OCI-LY7 (cell line): ENCODE measurements at regions of chr16 and their contacts with region 1.

Region 1: DNA sequence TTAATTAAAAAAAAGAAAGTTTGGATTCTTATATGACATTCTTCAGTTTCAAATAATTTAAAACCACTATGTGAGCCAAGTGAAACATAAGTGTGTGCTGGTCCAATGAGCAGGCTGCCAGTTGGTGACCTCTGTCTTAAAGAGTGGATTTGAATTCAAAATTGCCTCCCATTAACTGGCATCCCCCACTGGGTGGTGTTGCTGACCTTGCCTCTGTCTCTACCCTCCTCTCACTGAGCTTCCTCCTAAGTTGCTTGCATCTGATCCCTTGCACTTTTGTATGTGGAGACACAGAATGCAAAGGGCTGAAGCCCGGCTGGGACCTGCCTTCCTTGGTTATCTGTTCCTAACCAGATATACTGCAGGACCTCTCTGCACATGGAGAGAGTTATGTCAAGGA is 160.6 kb downstream of the CYLD start:
- DNase-seq: peak; percentile 2
- H3K4me3 ChIP-seq: no peak overlapping the region
- H3K27ac ChIP-seq: no peak overlapping the region
- H3K4me1 ChIP-seq: no peaks in the 10 kb centered on the region
- CTCF ChIP-seq: peak; percentile 28; the same call in 1 of the 2 replicates

Region 2: GRCh38 chr16:50859628-50860360 is 42.7 kb before region 1 on chr16:
- CTCF ChIA-PET with region 1: no interaction called
- POLR2A ChIA-PET with region 1: no interaction called
- intact Hi-C with region 1: loop called (anchors 10 kb)
- DNase-seq: no peak
- H3K4me3 ChIP-seq: no peak overlapping the region
- H3K27ac ChIP-seq: no peak overlapping the region
- H3K4me1 ChIP-seq: no peaks in the 10 kb centered on the region
- CTCF ChIP-seq: no peak

Region 3: GRCh38 chr16:51035110-51035498 is 132.6 kb after region 1 on chr16:
- CTCF ChIA-PET with region 1: no interaction called
- POLR2A ChIA-PET with region 1: no interaction called
- intact Hi-C with region 1: no loop called
- DNase-seq: peak; percentile 21
- H3K4me3 ChIP-seq: no peak overlapping the region
- H3K27ac ChIP-seq: peak overlapping the region; percentile 45
- H3K4me1 ChIP-seq: peaks cover 20% of the 10 kb centered on the region
- CTCF ChIP-seq: no peak

Region 4: GRCh38 chr16:51624080-51624775 is 721.8 kb after region 1 on chr16:
- CTCF ChIA-PET with region 1: no interaction called
- POLR2A ChIA-PET with region 1: no interaction called
- intact Hi-C with region 1: no loop called
- DNase-seq: no peak
- H3K4me3 ChIP-seq: no peak overlapping the region
- H3K27ac ChIP-seq: no peak overlapping the region
- H3K4me1 ChIP-seq: no peaks in the 10 kb centered on the region
- CTCF ChIP-seq: no peak